ENCODE measurements at regions of chr19 and their contacts with region 1.

Region 1: DNA sequence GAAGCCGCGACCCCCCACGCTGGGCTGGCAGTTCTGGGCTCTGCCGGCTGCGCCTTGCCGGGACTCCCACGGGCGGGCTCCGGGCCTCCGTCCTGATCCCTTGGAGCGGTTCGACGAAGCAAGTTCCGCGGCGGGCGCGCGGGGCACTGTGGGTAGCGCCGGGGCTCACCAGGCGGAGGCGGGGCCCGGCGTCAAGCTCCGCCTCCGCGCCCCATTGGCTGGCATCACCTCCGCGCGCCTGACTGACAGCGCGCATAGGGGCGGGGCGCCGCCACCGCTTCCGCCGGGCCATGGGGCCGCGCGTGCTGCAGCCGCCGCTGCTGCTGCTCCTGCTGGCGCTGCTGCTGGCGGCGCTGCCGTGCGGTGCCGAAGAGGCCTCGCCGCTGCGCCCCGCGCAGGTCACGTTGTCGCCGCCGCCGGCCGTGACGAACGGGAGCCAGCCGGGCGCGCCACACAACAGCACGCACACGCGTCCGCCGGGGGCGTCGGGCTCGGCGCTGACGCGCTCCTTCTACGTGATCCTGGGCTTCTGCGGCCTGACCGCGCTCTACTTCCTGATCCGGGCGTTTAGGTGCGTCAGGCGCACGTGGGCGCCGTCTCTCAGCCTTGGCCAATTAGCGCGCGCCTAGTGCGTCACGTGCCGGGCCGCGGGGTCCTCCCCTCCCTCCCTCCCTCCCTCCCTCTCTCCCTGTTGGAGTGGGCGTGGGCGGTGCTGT is at the start of gene FAM174C:
- DNase-seq: peak; percentile 90 to 97 (median 96)
- ATAC-seq: peak; percentile 90
- H3K4me3 ChIP-seq: peak within 1 kb of the TSS; percentile 75
- H3K4me3 Mint-ChIP-seq: peak within 1 kb of the TSS; percentile 79 to 93 (median 88)
- H3K27ac ChIP-seq: peak within 1 kb of the TSS; percentile 93
- H3K27ac Mint-ChIP-seq: peak within 1 kb of the TSS; percentile 62 to 98 (median 95)
- H3K4me1 ChIP-seq: peaks cover 46 to 60% of the 10 kb centered on the region in 2 donors
- H3K4me1 Mint-ChIP-seq: peaks cover 40 to 60% (median 48%) of the 10 kb centered on the region in 7 donors
- H3K27me3 ChIP-seq: no peaks in the 10 kb centered on the region
- H3K27me3 Mint-ChIP-seq: no peaks in the 10 kb centered on the region
- total RNA-seq, gene FAM174C: 31.7 to 57.3 (median 47.7) TPM

Region 2: GRCh38 chr19:1241417-1242095 is 33.9 kb before region 1 on chr19 and contains the start of gene ATP5F1D:
- CTCF ChIA-PET with region 1: interaction called, 7 read pairs
- POLR2A ChIA-PET with region 1: interaction called, 60 read pairs
- intact Hi-C with region 1: no loop called
- DNase-seq: peak; percentile 76 to 91 (median 85)
- ATAC-seq: peak; percentile 74
- H3K4me3 ChIP-seq: peak within 1 kb of the TSS; percentile 57
- H3K4me3 Mint-ChIP-seq: peak within 1 kb of the TSS; percentile 86 to 96 (median 90)
- H3K27ac ChIP-seq: peak within 1 kb of the TSS; percentile 82
- H3K27ac Mint-ChIP-seq: peak within 1 kb of the TSS; percentile 81 to 96 (median 93)
- H3K4me1 ChIP-seq: peaks cover 29 to 33% of the 10 kb centered on the region in 2 donors
- H3K4me1 Mint-ChIP-seq: peaks cover 16 to 47% (median 25%) of the 10 kb centered on the region in 7 donors
- H3K27me3 ChIP-seq: no peaks in the 10 kb centered on the region
- H3K27me3 Mint-ChIP-seq: peaks cover 4 to 18% (median 9%) of the 10 kb centered on the region in 5 donors
- total RNA-seq, gene ATP5F1D: 90.6 to 178 (median 102) TPM

Region 3: DNA sequence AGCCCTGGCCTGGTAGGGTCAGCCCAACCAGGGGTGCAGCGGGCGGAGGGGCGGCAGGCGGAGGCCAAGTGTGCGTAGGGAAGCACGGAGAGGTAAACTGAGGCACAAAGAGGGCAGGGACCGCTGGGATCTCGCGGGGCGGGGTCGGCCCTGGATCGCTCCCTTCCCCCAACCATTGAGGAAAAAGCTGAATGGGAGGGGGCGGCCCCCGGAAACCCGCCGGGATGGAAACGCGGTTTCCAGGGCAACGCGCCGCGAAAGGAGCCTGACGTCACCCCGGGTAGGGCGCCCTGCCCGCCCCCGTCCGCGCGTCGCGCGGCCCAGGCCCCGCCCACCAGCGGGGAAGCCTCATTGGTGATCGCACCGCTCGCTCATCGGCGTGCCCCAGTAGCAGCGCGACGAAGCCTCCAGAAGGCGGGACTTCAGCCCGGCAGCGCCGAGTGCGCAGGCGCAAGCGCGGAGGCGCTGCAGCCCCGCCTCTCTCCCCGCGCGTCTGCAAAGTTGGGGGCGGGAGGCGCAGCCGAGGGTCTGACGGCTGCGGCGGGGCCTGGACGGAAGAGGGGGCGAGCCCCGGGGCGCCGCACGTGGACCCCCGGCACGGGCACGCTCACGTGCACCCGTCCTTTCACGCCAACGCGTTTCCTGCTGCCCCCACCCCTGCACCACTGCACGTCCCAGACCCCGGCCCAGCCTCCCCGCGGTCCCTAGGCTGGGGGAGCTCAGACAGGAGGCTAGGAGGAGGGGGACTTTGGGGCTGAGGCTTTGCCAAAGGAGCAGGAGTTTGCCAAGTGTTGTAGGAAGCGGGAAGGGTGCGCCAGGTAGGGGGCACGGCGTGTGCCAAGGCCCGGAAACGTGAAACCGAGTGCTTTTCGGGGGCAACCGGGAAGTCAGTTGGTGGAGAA is 14.5 kb before region 1 on chr19:
- CTCF ChIA-PET with region 1: no interaction called
- POLR2A ChIA-PET with region 1: interaction called, 14 read pairs
- intact Hi-C with region 1: loop called in 1 of 2 experiments (anchors 2 kb)
- DNase-seq: peak; percentile 95 to 98 (median 96)
- ATAC-seq: peak; percentile 91
- H3K4me3 ChIP-seq: peak overlapping the region; percentile 95
- H3K4me3 Mint-ChIP-seq: peak overlapping the region; percentile 83 to 93 (median 88)
- H3K27ac ChIP-seq: peak overlapping the region; percentile 99
- H3K27ac Mint-ChIP-seq: peak overlapping the region; percentile 88 to 98 (median 96)
- H3K4me1 ChIP-seq: peaks cover 46 to 49% of the 10 kb centered on the region in 2 donors
- H3K4me1 Mint-ChIP-seq: peaks cover 34 to 65% (median 54%) of the 10 kb centered on the region in 7 donors
- H3K27me3 ChIP-seq: no peaks in the 10 kb centered on the region
- H3K27me3 Mint-ChIP-seq: no peaks in the 10 kb centered on the region

Region 4: GRCh38 chr19:1360818-1361461 is 85.5 kb after region 1 on chr19:
- CTCF ChIA-PET with region 1: no interaction called
- POLR2A ChIA-PET with region 1: no interaction called
- intact Hi-C with region 1: no loop called
- DNase-seq: no peak
- ATAC-seq: no peak
- H3K4me3 ChIP-seq: no peak overlapping the region
- H3K4me3 Mint-ChIP-seq: no peak overlapping the region
- H3K27ac ChIP-seq: no peak overlapping the region
- H3K27ac Mint-ChIP-seq: no peak overlapping the region
- H3K4me1 ChIP-seq: peaks cover 3 to 13% of the 10 kb centered on the region in 2 donors
- H3K4me1 Mint-ChIP-seq: peaks cover 20 to 46% (median 40%) of the 10 kb centered on the region in 7 donors
- H3K27me3 ChIP-seq: no peaks in the 10 kb centered on the region
- H3K27me3 Mint-ChIP-seq: no peaks in the 10 kb centered on the region

Region 5: GRCh38 chr19:1383311-1384084 is 108.1 kb after region 1 on chr19 and contains the start of gene NDUFS7:
- CTCF ChIA-PET with region 1: interaction called, 3 read pairs
- POLR2A ChIA-PET with region 1: interaction called, 7 read pairs
- intact Hi-C with region 1: loop called in 1 of 2 experiments (anchors 1 kb)
- DNase-seq: peak; percentile 87 to 100 (median 95)
- ATAC-seq: peak; percentile 95
- H3K4me3 ChIP-seq: peak within 1 kb of the TSS; percentile 92
- H3K4me3 Mint-ChIP-seq: peak within 1 kb of the TSS; percentile 87 to 99 (median 94)
- H3K27ac ChIP-seq: peak within 1 kb of the TSS; percentile 76
- H3K27ac Mint-ChIP-seq: peak within 1 kb of the TSS; percentile 98 to 100 (median 100)
- H3K4me1 ChIP-seq: peaks cover 5 to 9% of the 10 kb centered on the region in 2 donors
- H3K4me1 Mint-ChIP-seq: peaks cover 12 to 31% (median 22%) of the 10 kb centered on the region in 7 donors
- H3K27me3 ChIP-seq: no peaks in the 10 kb centered on the region
- H3K27me3 Mint-ChIP-seq: peaks cover 0 to 10% (median 3%) of the 10 kb centered on the region in 5 donors
- total RNA-seq, gene NDUFS7: 48.4 to 101 (median 68.0) TPM

Region 6: DNA sequence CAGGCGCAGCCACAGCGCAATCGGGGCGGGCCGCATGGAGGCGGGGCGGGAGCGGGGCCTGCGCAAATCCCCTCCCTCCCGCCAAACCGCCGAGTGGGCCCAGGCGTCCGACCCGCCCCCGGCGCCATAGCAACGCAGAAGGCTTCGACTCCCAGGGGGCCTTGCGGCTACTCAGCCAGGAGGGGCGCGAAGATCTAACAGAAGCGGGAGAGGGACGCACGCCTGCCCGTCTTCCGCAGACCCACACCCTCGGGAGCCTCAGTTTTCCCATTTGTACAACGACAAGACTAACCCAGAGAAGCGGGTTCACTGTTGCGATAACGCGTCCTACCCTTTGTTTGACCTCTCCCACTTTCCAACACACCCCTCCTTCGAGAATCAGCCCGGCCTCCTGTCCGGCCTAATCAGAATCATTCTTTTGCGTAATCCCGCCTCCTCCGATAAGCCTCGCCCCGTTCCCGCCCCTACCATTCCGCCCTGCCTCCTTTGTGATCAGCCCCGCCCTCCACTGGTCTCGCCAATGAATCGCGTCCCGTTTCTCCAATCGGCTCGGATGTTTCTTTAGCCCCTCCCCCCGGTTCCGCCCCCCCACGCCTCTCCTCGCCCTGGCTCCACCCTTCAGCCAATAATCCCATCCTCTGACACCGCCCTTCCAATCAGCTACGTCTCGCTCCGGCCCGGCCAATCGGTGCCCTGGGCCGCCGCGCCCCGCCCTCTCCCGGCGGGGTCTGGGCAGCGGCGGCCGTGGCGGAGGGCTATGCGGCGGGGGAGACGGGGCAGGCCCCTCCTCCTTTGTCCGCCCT is 215.1 kb after region 1 on chr19 and contains the start of gene PCSK4:
- CTCF ChIA-PET with region 1: no interaction called
- POLR2A ChIA-PET with region 1: no interaction called
- intact Hi-C with region 1: loop called in 1 of 2 experiments (anchors 1 kb)
- DNase-seq: peak; percentile 84 to 99 (median 98)
- ATAC-seq: peak; percentile 93
- H3K4me3 ChIP-seq: peak within 1 kb of the TSS; percentile 77
- H3K4me3 Mint-ChIP-seq: peak within 1 kb of the TSS; percentile 83 to 94 (median 92)
- H3K27ac ChIP-seq: peak within 1 kb of the TSS; percentile 63
- H3K27ac Mint-ChIP-seq: peak within 1 kb of the TSS; percentile 83 to 96 (median 86)
- H3K4me1 ChIP-seq: peaks cover 9 to 10% of the 10 kb centered on the region in 2 donors
- H3K4me1 Mint-ChIP-seq: peaks cover 7 to 17% (median 15%) of the 10 kb centered on the region in 7 donors
- H3K27me3 ChIP-seq: no peaks in the 10 kb centered on the region
- H3K27me3 Mint-ChIP-seq: peaks cover 0 to 14% (median 0%) of the 10 kb centered on the region in 5 donors
- total RNA-seq, gene PCSK4: 0.87 to 10.8 (median 7.8) TPM

Region 7: GRCh38 chr19:1767464-1767933 is 492.1 kb after region 1 on chr19:
- CTCF ChIA-PET with region 1: no interaction called
- POLR2A ChIA-PET with region 1: no interaction called
- intact Hi-C with region 1: no loop called
- DNase-seq: peak; percentile 26 to 77 (median 60)
- ATAC-seq: peak; percentile 89
- H3K4me3 ChIP-seq: no peak overlapping the region
- H3K4me3 Mint-ChIP-seq: no peak overlapping the region
- H3K27ac ChIP-seq: no peak overlapping the region
- H3K27ac Mint-ChIP-seq: no peak overlapping the region
- H3K4me1 ChIP-seq: no peaks in the 10 kb centered on the region
- H3K4me1 Mint-ChIP-seq: no peaks in the 10 kb centered on the region
- H3K27me3 ChIP-seq: peaks cover 13 to 16% of the 10 kb centered on the region in 2 donors
- H3K27me3 Mint-ChIP-seq: peaks cover 58 to 86% (median 66%) of the 10 kb centered on the region in 5 donors

Region 8: GRCh38 chr19:1812469-1813196 is 537.2 kb after region 1 on chr19:
- CTCF ChIA-PET with region 1: no interaction called
- POLR2A ChIA-PET with region 1: no interaction called
- intact Hi-C with region 1: loop called in 1 of 2 experiments (anchors 1 kb)
- DNase-seq: peak; percentile 70 to 88 (median 84)
- ATAC-seq: peak; percentile 85
- H3K4me3 ChIP-seq: peak overlapping the region; percentile 65
- H3K4me3 Mint-ChIP-seq: peak overlapping the region; percentile 93 to 99 (median 96)
- H3K27ac ChIP-seq: peak overlapping the region; percentile 63
- H3K27ac Mint-ChIP-seq: peak overlapping the region; percentile 82 to 97 (median 92)
- H3K4me1 ChIP-seq: peaks cover 0 to 8% of the 10 kb centered on the region in 2 donors
- H3K4me1 Mint-ChIP-seq: peaks cover 9 to 19% (median 11%) of the 10 kb centered on the region in 7 donors
- H3K27me3 ChIP-seq: no peaks in the 10 kb centered on the region
- H3K27me3 Mint-ChIP-seq: no peaks in the 10 kb centered on the region

Measured in naive thymus-derived CD4-positive, alpha-beta T cell (primary cell).